A549 (cell line): ENCODE measurements at regions of chr9 and their contacts with region 1.

Region 1: GRCh38 chr9:137029058-137029936 is 1.3 kb upstream of the ABCA2 start:
- DNase-seq: peak; percentile 67 to 73
- ATAC-seq: peak; percentile 63 to 90
- H3K4me3 ChIP-seq: peak overlapping the region; percentile 74; the same call in 1 of the 3 replicates
- H3K27ac ChIP-seq: peak overlapping the region in 1 of 2 experiments; percentile 92; a peak in 4 of 6 replicates
- H3K4me1 ChIP-seq: peaks cover 26% of the 10 kb centered on the region
- CTCF ChIP-seq: peak; percentile 67
- EP300 ChIP-seq: no peak
- POLR2A ChIP-seq: no peak
- RAD21 ChIP-seq: peak in 1 of 2 experiments; percentile 49; a peak in 2 of 5 replicates

Region 2: GRCh38 chr9:136614372-136614922 is 414.9 kb before region 1 on chr9:
- CTCF ChIA-PET with region 1: no interaction called
- POLR2A ChIA-PET with region 1: no interaction called
- DNase-seq: no peak
- ATAC-seq: no peak
- H3K4me3 ChIP-seq: no peak overlapping the region
- H3K27ac ChIP-seq: peak overlapping the region in 1 of 2 experiments; percentile 25; a peak in 1 of 6 replicates
- H3K4me1 ChIP-seq: no peaks in the 10 kb centered on the region
- CTCF ChIP-seq: no peak
- EP300 ChIP-seq: no peak
- POLR2A ChIP-seq: no peak
- RAD21 ChIP-seq: no peak

Region 3: DNA sequence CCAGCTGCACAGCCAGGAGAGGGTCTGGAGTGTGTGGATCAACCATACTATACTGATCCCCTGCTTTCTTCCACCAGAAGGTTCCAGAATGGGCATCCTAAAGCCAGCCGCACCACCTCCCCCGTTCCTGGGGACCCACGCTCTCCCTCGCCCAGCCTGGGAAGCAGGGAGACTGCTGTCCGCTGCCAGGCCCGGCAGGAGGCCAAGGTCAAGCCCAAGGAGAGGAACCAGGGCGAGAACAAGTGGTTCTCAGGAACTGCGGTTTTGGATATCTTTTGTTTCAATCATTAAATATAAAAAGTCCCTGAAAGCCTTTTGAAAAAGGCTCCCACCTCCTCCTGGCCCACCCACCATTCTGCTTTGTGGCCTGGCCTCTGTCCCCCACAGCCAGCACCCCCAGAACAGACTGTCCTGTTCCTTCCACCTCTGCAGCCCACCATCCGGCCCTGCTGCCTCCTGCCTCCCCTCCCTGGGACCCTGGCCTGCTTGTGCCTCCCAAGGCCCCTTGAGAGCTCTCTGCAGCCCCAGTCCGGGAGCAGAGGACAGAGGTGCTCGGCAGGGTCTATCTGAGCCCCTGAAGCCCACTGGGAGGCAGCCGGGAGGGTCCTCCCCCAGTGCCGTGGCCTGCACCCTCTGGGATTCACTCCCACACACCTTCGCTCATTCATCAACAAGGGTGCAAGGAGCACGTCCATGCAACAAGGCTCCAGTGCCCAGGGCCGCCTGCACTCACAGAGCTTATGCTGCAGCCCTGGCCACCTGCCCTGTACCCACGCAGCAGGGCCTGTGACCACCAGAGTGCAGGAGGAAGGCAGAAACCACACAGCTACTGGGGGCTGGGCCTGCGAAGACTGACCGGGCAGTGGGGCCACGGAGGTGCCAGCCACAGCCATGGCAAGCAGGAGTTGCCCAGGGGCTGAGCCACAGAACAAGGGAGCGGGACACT is 280.4 kb before region 1 on chr9:
- CTCF ChIA-PET with region 1: no interaction called
- POLR2A ChIA-PET with region 1: no interaction called
- DNase-seq: no peak
- ATAC-seq: no peak
- H3K4me3 ChIP-seq: no peak overlapping the region
- H3K27ac ChIP-seq: no peak overlapping the region
- H3K4me1 ChIP-seq: no peaks in the 10 kb centered on the region
- CTCF ChIP-seq: no peak
- EP300 ChIP-seq: no peak
- POLR2A ChIP-seq: no peak
- RAD21 ChIP-seq: no peak

Region 4: GRCh38 chr9:136790927-136791641 is 238.2 kb before region 1 on chr9 and contains the start of gene TMEM141:
- CTCF ChIA-PET with region 1: interaction called, 33 read pairs
- POLR2A ChIA-PET with region 1: no interaction called
- DNase-seq: peak; percentile 90 to 100
- ATAC-seq: peak; percentile 85 to 90
- H3K4me3 ChIP-seq: peak within 1 kb of the TSS; percentile 88
- H3K27ac ChIP-seq: peak within 1 kb of the TSS; percentile 91 to 94
- H3K4me1 ChIP-seq: peaks cover 45% of the 10 kb centered on the region
- CTCF ChIP-seq: no peak
- EP300 ChIP-seq: no peak
- POLR2A ChIP-seq: peak; percentile 75
- RAD21 ChIP-seq: no peak
- polyA plus RNA-seq, gene TMEM141: 64.5 and 78.0 TPM in 2 replicates

Region 5: GRCh38 chr9:136850866-136851775 is 178.2 kb before region 1 on chr9:
- CTCF ChIA-PET with region 1: no interaction called
- POLR2A ChIA-PET with region 1: no interaction called
- DNase-seq: no peak
- ATAC-seq: no peak
- H3K4me3 ChIP-seq: no peak overlapping the region
- H3K27ac ChIP-seq: peak overlapping the region; percentile 96 to 97; a peak in 5 of 6 replicates
- H3K4me1 ChIP-seq: peaks cover 40% of the 10 kb centered on the region
- CTCF ChIP-seq: no peak
- EP300 ChIP-seq: no peak
- POLR2A ChIP-seq: no peak; the same call in 1 of the 2 replicates
- RAD21 ChIP-seq: no peak

Region 6: DNA sequence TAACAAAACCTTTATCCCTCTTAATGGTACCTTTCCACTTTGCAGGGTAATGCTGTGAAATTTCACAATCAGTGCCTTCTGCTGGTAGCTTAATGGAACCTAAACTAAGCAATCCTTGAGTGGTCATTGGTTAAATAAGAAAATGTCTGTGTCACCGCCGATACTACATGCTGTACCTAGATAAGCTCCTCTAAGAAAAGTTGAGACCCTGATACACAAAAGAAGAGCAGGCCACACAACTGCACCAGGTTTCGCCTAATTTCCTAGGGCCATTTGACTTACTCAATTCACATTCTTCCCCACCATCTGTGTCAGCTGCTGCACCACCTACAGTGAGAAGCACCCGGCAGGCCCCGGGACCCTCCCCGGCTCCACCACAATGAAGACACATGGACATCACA is 154.1 kb before region 1 on chr9:
- CTCF ChIA-PET with region 1: no interaction called
- POLR2A ChIA-PET with region 1: no interaction called
- DNase-seq: no peak
- ATAC-seq: no peak
- H3K4me3 ChIP-seq: no peak overlapping the region
- H3K27ac ChIP-seq: no peak overlapping the region
- H3K4me1 ChIP-seq: no peaks in the 10 kb centered on the region
- CTCF ChIP-seq: no peak
- EP300 ChIP-seq: no peak
- POLR2A ChIP-seq: no peak
- RAD21 ChIP-seq: no peak

Region 7: DNA sequence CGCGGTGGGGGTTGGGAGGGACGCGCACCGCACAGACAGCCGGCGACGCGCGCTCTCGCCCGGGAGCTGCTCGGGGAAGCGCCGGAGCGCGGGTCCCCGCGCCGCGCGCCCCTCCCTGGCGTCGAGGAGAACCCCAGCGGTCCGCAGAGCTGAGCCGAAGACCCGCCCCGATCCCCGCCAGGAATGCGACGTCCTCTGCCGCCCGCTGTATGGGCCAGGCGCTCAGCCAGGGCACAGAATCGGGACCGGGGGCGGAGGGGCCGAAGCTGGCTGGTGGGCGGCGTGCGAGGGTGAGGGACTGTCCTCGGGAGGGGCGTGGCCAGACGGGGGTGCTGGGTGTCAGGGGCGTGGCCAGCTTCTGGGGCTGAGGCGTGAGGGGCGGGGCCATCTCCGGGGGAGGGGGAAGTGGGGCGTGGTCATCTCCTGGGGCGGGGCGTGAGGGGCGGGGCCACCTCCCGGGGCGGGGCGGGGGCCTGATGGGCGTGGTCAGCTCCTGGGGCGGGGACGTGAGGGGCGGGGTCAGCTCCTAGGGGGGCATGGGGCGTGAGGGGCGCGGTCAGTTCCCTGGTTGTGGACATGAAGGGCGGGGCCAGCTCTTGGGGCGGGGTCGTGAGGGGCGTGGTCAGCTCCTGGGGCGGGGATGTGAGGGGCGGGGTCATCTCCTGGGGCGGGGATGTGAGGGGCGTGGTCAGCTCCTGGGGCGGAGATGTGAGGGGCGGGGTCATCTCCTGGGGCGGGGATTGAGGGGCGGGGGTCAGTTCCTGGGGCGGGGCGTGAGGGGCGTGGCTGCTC is 51.0 kb before region 1 on chr9:
- CTCF ChIA-PET with region 1: interaction called, 26 read pairs
- POLR2A ChIA-PET with region 1: no interaction called
- DNase-seq: peak; percentile 89 to 95
- ATAC-seq: peak; percentile 4 to 56
- H3K4me3 ChIP-seq: peak overlapping the region; percentile 45
- H3K27ac ChIP-seq: peak overlapping the region; percentile 52 to 94
- H3K4me1 ChIP-seq: peaks cover 14% of the 10 kb centered on the region
- CTCF ChIP-seq: no peak
- EP300 ChIP-seq: no peak
- POLR2A ChIP-seq: no peak
- RAD21 ChIP-seq: no peak

Region 8: DNA sequence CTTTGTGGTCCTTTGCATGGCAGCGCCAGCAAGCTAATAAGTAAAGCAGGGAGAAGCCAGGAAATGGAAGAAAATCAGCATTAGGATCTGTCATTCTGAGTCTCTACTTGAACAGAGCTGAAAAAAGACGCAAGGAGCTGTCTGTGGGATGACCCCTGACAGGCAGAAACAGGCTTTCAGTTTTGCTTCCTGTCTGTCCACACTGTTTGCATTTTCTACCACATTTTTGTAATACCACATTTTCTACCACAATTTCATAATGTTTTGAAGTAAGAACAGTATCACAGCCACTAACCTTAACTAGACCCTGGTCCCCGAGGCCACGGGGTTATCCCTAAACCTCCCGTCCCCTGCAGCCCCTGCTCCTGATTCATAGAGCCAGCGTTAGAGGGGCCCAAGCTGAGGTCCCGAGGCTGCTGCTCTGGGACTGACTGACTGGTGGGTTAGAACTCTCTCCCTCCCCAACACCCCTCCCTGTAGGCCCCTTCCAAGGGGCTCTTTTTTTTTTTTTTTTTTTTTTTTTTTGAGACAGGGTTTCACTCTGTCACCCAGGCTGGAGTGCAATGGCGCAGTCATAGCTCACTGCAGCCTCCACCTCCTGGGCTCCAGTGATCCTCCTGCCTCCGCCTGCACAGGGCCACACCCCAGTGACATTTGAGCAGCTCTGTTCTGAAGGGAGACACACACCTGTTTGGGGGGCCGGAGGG is 29.0 kb before region 1 on chr9:
- CTCF ChIA-PET with region 1: interaction called, 37 read pairs
- POLR2A ChIA-PET with region 1: interaction called, 4 read pairs
- DNase-seq: no peak
- ATAC-seq: no peak
- H3K4me3 ChIP-seq: no peak overlapping the region
- H3K27ac ChIP-seq: 0 out of 6 replicates have a peak overlapping the region, but pooled peaks of 1 of the 2 experiments have one; percentile 15
- H3K4me1 ChIP-seq: peaks cover 41% of the 10 kb centered on the region
- CTCF ChIP-seq: no peak
- EP300 ChIP-seq: no peak
- POLR2A ChIP-seq: no peak
- RAD21 ChIP-seq: no peak

Region 9: DNA sequence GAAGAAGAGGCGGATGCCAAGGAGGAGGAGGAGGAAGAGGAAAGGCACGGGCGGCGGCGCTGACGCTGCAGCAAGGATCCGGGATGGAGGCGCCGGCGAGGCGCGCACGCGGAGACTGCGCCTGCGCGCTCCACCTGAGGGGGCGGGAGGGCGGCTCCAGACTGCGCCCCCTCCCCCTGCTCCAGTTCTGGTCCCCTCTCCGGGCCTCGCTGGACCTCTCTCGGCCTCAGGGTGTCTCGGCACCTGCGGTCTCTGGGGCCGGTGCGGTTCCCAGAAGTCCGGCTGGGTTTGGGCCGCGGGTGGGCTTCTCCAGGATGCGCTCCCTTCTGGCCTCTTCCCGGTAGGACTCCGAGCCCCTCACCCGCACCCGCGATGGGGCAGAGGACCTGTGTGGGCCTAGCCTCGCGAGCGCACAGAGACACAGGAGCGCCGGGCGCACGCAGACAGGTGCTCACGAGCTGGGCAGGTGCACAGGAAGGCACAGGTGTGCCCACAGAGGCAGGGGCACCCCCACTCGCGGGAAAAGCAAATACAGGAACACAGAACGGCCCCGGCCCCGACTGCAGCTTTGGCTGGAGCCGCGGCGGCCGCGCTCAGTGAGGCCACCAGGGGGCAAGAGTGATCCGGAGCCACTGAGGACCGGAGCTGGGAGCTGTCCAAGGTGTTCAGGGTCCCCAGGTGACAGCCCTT is 16.9 kb after region 1 on chr9 and contains the start of gene NPDC1:
- CTCF ChIA-PET with region 1: interaction called, 169 read pairs
- POLR2A ChIA-PET with region 1: interaction called, 5 read pairs
- DNase-seq: peak; percentile 83 to 94
- ATAC-seq: peak; percentile 68 to 76
- H3K4me3 ChIP-seq: peak within 1 kb of the TSS; percentile 71
- H3K27ac ChIP-seq: peak within 1 kb of the TSS; percentile 77 to 92
- H3K4me1 ChIP-seq: peaks cover 15% of the 10 kb centered on the region
- CTCF ChIP-seq: peak; percentile 70
- EP300 ChIP-seq: no peak
- POLR2A ChIP-seq: peak; percentile 60
- RAD21 ChIP-seq: peak; percentile 71 to 77
- polyA plus RNA-seq, gene NPDC1: 12.7 and 13.0 TPM in 2 replicates

Region 10: GRCh38 chr9:137077010-137077747 is 47.9 kb after region 1 on chr9 and contains the start of gene UAP1L1:
- CTCF ChIA-PET with region 1: interaction called, 207 read pairs
- POLR2A ChIA-PET with region 1: no interaction called
- DNase-seq: peak in 1 of 2 experiments; percentile 44
- ATAC-seq: peak; percentile 62 to 67
- H3K4me3 ChIP-seq: peak within 1 kb of the TSS; percentile 66
- H3K27ac ChIP-seq: peak within 1 kb of the TSS; percentile 72 to 92
- H3K4me1 ChIP-seq: peaks cover 11% of the 10 kb centered on the region
- CTCF ChIP-seq: no peak
- EP300 ChIP-seq: no peak
- POLR2A ChIP-seq: no peak
- RAD21 ChIP-seq: no peak
- polyA plus RNA-seq, gene UAP1L1: 1.2 and 1.9 TPM in 2 replicates